HepG2 (cell line): ENCODE measurements at regions of chr14 and their contacts with region 1.

Region 1: GRCh38 chr14:60184146-60184904 is 19.1 kb upstream of the DHRS7 start:
- DNase-seq: peak; percentile 55
- ATAC-seq: 0 out of 3 replicates have a peak, but pooled peaks have one; percentile 36
- H3K4me3 ChIP-seq: peak overlapping the region; percentile 33 to 71 (median 45); a peak in 5 of 6 replicates
- H3K27ac ChIP-seq: no peak overlapping the region
- H3K4me1 ChIP-seq: peaks cover 12% of the 10 kb centered on the region; the same call in 1 of the 2 replicates
- H3K27me3 ChIP-seq: no peaks in the 10 kb centered on the region
- CTCF ChIP-seq: peak; percentile 74
- EP300 ChIP-seq: no peak
- POLR2A ChIP-seq: no peak
- RAD21 ChIP-seq: peak; percentile 61; the same call in 1 of the 2 replicates

Region 2: GRCh38 chr14:59964251-59965007 is 219.9 kb before region 1 on chr14:
- CTCF ChIA-PET with region 1: interaction called, 30 read pairs
- POLR2A ChIA-PET with region 1: interaction called, 3 read pairs
- in situ Hi-C with region 1: loop called (anchors 5 kb)
- intact Hi-C with region 1: loop called (anchors 1 kb)
- DNase-seq: no peak
- ATAC-seq: peak; percentile 41
- H3K4me3 ChIP-seq: no peak overlapping the region
- H3K27ac ChIP-seq: no peak overlapping the region
- H3K4me1 ChIP-seq: no peaks in the 10 kb centered on the region
- H3K27me3 ChIP-seq: no peaks in the 10 kb centered on the region
- CTCF ChIP-seq: no peak
- EP300 ChIP-seq: no peak
- POLR2A ChIP-seq: no peak
- RAD21 ChIP-seq: no peak

Region 3: DNA sequence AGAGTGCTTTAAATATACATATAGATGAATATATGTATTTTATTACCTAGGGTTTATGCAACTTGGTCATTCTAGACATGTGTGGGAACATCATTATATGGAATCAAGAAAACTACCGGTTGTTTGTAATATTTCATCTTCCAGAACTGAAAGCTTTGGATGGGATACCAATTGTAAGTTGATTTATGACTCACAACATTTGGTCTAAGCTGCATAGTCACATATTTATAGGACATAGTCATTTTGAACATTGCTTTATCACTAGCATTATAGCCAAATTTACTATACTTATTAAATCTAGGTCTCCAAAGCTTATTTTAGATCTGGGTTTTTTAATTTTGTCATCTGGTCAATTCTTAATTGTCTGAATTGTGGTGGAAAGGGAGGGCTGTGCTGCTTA is 176.3 kb before region 1 on chr14:
- CTCF ChIA-PET with region 1: no interaction called
- POLR2A ChIA-PET with region 1: no interaction called
- in situ Hi-C with region 1: no loop called
- intact Hi-C with region 1: no loop called
- DNase-seq: no peak
- ATAC-seq: no peak
- H3K4me3 ChIP-seq: no peak overlapping the region
- H3K27ac ChIP-seq: no peak overlapping the region
- H3K4me1 ChIP-seq: peaks cover 12% of the 10 kb centered on the region; the same call in 1 of the 2 replicates
- H3K27me3 ChIP-seq: no peaks in the 10 kb centered on the region
- CTCF ChIP-seq: no peak
- EP300 ChIP-seq: no peak
- POLR2A ChIP-seq: no peak
- RAD21 ChIP-seq: no peak

Region 4: GRCh38 chr14:60064491-60065072 is 119.7 kb before region 1 on chr14:
- CTCF ChIA-PET with region 1: interaction called, 41 read pairs
- POLR2A ChIA-PET with region 1: no interaction called
- in situ Hi-C with region 1: loop called (anchors 5 kb)
- intact Hi-C with region 1: loop called (anchors 1 kb)
- DNase-seq: peak; percentile 9
- ATAC-seq: no peak
- H3K4me3 ChIP-seq: no peak overlapping the region
- H3K27ac ChIP-seq: no peak overlapping the region
- H3K4me1 ChIP-seq: no peaks in the 10 kb centered on the region
- H3K27me3 ChIP-seq: no peaks in the 10 kb centered on the region; a peak in 1 of 5 replicates
- CTCF ChIP-seq: peak; percentile 54
- EP300 ChIP-seq: no peak
- POLR2A ChIP-seq: no peak
- RAD21 ChIP-seq: 0 out of 2 replicates have a peak, but pooled peaks have one; percentile 10